ENCODE measurements at regions of chr14 and their contacts with region 1.

Region 1: DNA sequence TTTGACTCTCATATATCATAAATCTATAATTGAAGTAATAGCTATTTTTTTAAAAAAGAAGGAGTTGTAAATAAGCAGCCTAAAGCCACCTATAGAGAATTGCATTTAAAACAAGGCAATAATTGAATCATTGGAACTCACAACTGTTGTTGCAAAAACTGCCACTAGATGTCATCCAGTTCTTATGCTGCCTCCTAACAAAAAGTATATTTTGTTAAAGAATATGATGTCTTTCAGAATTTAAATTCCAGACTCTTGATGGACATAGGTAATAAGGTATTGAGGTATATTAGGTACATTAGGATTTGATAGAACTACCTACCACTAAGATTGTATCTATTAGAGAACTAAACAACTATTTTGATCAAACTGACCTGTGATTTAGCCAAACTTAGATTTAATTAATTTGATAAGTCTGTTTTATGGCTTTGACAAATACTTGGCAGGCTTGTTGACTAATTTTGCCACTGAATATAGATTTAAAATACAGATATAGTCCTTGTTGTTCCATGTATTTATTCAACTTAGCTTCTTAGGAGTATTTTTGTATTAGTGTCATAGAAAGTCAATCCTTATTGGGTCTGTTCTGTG is 401.4 kb downstream of the RPL10L start:
- DNase-seq: peak; percentile 42 to 64 (median 60)
- H3K4me3 ChIP-seq: no peak overlapping the region
- H3K27ac ChIP-seq: no peak overlapping the region
- H3K4me1 ChIP-seq: peaks cover 0 to 16% (median 3%) of the 10 kb centered on the region in 4 experiments
- H3K27me3 ChIP-seq: no peaks in the 10 kb centered on the region

Region 2: DNA sequence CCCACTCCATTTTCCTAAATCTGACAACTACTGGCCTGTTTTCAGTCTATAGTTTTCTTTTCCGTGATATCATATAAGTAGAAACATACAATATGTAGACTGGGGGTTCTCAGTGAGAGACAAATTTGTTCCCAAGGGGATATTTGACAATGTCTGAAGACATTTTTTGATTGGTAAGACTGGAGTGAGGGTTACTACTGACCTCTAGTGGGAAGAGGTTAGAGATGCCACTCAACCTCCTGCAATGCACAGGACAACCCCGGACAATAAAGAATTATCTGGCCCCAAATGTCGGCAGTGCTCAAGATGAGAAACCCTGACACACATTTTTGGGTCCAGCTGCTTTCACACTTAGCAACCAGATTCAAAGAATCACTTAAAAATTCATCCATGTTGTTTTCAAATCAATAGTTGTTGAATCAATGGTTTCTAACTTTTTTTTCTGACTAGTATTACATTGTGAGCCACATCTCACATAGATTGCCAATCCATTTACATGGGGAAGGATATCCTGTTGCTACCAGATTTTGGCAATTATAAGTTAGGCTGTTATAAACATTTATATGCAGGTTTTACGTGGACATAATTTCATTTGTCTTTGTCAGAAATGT is 94.2 kb after region 1 on chr14:
- CTCF ChIA-PET with region 1: interaction called, 42 read pairs
- POLR2A ChIA-PET with region 1: no interaction called
- DNase-seq: peak; percentile 56 to 71 (median 64)
- H3K4me3 ChIP-seq: no peak overlapping the region
- H3K27ac ChIP-seq: no peak overlapping the region
- H3K4me1 ChIP-seq: no peaks in the 10 kb centered on the region
- H3K27me3 ChIP-seq: no peaks in the 10 kb centered on the region